ENCODE measurements at regions of chr10 and their contacts with region 1.

Region 1: GRCh38 chr10:17430647-17431355 is 23.6 kb downstream of the ST8SIA6 start:
- DNase-seq: peak; percentile 54 to 68 (median 63)
- H3K4me3 ChIP-seq: no peak overlapping the region
- H3K4me3 Mint-ChIP-seq: peak overlapping the region in 6 of 8 donors; percentile 39 to 79 (median 66)
- H3K27ac ChIP-seq: no peak overlapping the region
- H3K27ac Mint-ChIP-seq: peak overlapping the region; percentile 24 to 95 (median 50)
- H3K4me1 ChIP-seq: peaks cover 52% of the 10 kb centered on the region
- H3K4me1 Mint-ChIP-seq: peaks cover 45 to 53% (median 50%) of the 10 kb centered on the region in 4 donors
- H3K27me3 ChIP-seq: no peaks in the 10 kb centered on the region
- H3K27me3 Mint-ChIP-seq: peaks cover 0 to 1% of the 10 kb centered on the region in 2 donors

Region 2: DNA sequence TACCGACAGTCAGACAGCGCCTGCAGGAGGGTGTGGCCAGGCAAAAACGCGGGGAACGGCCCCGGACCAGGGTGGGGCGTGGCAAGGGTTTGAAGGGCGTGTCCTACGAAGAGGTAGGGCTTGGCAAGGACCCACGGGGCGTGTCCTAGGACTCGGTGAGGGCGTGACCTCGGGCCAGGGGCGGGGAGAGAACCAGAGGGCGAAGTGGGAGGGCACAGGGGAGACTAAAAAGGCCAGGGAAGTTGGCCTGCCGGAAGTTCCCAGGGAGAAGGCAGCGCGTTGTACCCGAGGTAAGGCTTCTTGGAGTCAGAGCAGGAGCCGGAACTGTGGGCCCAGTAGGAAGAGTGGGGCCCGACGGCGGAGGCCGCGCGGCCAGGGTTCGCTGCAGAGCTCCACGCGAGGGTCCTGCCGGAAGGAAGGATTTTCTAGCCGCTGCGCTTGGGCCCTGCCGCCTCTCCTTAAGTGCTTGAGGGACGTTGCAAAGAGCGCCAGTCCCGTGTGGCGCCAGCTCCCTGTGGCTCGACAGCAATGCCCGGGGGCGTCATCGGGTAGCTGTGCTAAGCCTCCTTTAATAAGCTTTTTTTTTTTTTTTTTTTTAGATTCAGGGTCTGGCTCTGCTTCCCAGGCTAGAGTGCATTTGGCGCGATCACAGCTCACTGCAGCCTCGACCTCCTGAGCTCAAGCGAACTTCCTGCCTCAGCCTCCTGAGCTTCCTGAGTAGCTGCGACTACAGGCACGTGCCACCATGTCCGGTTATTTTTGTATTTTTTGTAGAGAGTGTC is 993.9 kb before region 1 on chr10 and contains the start of gene PTER:
- CTCF ChIA-PET with region 1: no interaction called
- POLR2A ChIA-PET with region 1: no interaction called
- intact Hi-C with region 1: loop called (anchors 5 kb)
- DNase-seq: peak; percentile 94 to 96 (median 95)
- H3K4me3 ChIP-seq: peak within 1 kb of the TSS; percentile 63 to 65
- H3K4me3 Mint-ChIP-seq: peak within 1 kb of the TSS; percentile 88 to 97 (median 93)
- H3K27ac ChIP-seq: peak within 1 kb of the TSS; percentile 65
- H3K27ac Mint-ChIP-seq: peak within 1 kb of the TSS; percentile 85 to 96 (median 95)
- H3K4me1 ChIP-seq: peaks cover 52% of the 10 kb centered on the region
- H3K4me1 Mint-ChIP-seq: peaks cover 35 to 58% (median 48%) of the 10 kb centered on the region in 4 donors
- H3K27me3 ChIP-seq: no peaks in the 10 kb centered on the region
- H3K27me3 Mint-ChIP-seq: no peaks in the 10 kb centered on the region
- total RNA-seq, gene PTER: 24.1 to 26.5 TPM

Region 3: DNA sequence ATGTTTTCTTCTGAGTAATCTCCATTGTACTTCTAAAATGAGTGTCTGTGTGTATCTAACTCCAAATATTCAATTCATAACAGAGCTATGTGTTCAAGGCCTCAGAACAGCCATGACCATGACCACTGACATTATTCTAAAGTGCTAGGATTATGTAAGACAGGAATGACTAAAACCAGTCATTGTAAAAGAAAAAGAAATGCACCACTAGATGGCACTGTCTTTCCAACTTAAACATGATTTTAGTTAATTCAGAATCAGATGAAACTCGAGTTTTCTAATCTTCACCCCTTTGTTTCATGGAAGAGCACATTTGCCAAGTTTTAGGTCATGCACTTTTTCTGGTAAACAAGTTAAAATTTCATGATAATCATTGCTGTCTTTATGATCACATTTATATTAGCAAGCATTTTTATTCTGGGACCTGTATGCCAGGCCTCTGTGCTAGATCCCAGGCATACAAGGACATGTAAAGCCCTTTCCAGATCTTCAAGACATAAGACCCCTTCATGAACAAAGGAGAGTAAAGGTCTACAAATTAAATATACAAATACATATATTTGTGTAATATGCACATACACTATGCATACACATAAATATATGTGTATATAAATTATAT is 587.4 kb before region 1 on chr10:
- CTCF ChIA-PET with region 1: interaction called, 5 read pairs
- POLR2A ChIA-PET with region 1: no interaction called
- intact Hi-C with region 1: loop called (anchors 1 kb)
- DNase-seq: peak in 4 of 5 donors; percentile 63 to 69 (median 67)
- H3K4me3 ChIP-seq: no peak overlapping the region
- H3K4me3 Mint-ChIP-seq: no peak overlapping the region
- H3K27ac ChIP-seq: no peak overlapping the region
- H3K27ac Mint-ChIP-seq: peak overlapping the region in 1 of 7 donors; percentile 31
- H3K4me1 ChIP-seq: no peaks in the 10 kb centered on the region
- H3K4me1 Mint-ChIP-seq: peaks cover 0 to 3% (median 0%) of the 10 kb centered on the region in 4 donors
- H3K27me3 ChIP-seq: no peaks in the 10 kb centered on the region
- H3K27me3 Mint-ChIP-seq: no peaks in the 10 kb centered on the region

Region 4: DNA sequence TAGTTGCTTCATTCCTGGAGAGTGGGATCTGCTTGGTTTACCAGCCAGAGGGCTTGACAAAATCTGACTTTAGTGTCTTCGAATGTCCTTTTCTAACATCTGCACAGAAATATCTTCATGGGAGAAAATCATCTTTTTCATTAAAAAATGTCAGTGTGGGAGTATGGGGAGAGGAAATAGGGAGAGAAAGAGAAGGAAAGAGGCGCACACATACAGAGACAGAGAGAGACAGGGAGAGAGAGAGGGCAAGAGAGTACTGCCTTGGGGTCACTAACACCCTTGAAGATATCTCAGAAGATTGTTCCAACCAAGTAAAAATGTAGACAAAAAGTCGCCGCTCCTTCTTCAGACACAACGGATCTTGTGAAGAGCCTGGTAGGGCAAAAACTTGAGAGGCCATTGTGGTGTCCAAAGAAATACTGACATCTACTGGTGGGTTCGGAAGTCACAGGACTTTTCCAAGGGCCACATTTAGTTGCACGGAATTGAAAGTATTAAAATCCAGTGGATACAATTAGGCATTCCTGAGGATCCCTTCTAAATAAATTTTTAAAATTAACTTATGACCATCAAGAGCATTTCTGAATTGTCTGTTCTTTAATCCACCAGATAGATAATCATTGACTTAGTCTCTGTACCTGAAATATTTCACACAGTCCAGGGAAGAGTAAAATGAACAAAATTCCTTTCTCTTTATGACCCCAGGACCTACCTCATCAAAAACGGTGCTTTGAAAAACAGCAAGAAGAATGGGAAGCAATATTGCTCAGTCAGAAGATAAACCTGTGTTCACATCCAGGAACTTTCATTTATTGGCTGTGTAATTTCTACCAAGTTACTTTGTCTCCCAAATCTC is 173.1 kb before region 1 on chr10:
- CTCF ChIA-PET with region 1: interaction called, 3 read pairs
- POLR2A ChIA-PET with region 1: no interaction called
- intact Hi-C with region 1: loop called (anchors 1 kb)
- DNase-seq: peak; percentile 49 to 71 (median 64)
- H3K4me3 ChIP-seq: no peak overlapping the region
- H3K4me3 Mint-ChIP-seq: peak overlapping the region in 1 of 8 donors; percentile 43
- H3K27ac ChIP-seq: no peak overlapping the region
- H3K27ac Mint-ChIP-seq: peak overlapping the region in 3 of 7 donors; percentile 0 to 84 (median 67)
- H3K4me1 ChIP-seq: no peaks in the 10 kb centered on the region
- H3K4me1 Mint-ChIP-seq: peaks cover 0 to 6% (median 4%) of the 10 kb centered on the region in 4 donors
- H3K27me3 ChIP-seq: no peaks in the 10 kb centered on the region
- H3K27me3 Mint-ChIP-seq: no peaks in the 10 kb centered on the region

Region 5: GRCh38 chr10:17409170-17409733 is 21.5 kb before region 1 on chr10:
- CTCF ChIA-PET with region 1: interaction called, 467 read pairs
- POLR2A ChIA-PET with region 1: interaction called, 82 read pairs
- intact Hi-C with region 1: loop called (anchors 1 kb)
- DNase-seq: peak in 4 of 5 donors; percentile 40 to 54 (median 51)
- H3K4me3 ChIP-seq: no peak overlapping the region
- H3K4me3 Mint-ChIP-seq: peak overlapping the region in 4 of 8 donors; percentile 1 to 42 (median 2)
- H3K27ac ChIP-seq: no peak overlapping the region
- H3K27ac Mint-ChIP-seq: peak overlapping the region in 6 of 7 donors; percentile 16 to 86 (median 42)
- H3K4me1 ChIP-seq: peaks cover 14% of the 10 kb centered on the region
- H3K4me1 Mint-ChIP-seq: peaks cover 15 to 27% (median 20%) of the 10 kb centered on the region in 4 donors
- H3K27me3 ChIP-seq: no peaks in the 10 kb centered on the region
- H3K27me3 Mint-ChIP-seq: peaks cover 0 to 3% of the 10 kb centered on the region in 2 donors

Region 6: DNA sequence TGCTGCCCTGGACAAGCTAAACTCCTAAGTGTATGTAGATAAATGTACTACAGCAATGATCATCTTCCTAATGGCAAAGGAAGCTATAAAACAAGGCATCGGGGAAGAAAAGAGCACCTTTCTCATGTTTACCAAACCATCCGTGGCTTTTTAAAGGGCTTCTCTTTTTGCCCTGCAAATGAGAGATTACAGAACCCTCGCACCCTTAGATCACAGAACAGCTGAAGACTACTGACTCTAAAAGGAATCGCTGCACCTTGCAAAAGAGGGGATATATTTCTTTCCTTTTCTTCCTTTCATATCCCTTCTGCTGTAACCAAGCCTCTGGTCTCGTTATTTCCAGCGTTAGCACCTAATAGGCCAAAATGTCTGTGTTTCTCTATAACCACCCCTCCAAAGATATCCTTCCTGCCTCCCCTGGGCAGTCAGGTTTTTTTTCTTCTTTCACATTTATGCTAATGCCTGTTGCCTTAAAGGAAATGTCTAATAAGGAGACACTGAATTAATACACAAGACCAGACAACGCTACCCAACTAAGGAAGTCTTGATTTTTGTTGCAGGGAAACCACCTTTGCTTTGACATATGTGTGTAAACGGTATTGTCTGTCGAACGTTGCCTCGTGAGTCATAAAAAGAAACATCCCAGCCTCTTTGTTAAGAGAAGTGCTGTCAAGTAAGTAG is 13.0 kb after region 1 on chr10:
- CTCF ChIA-PET with region 1: interaction called, 22 read pairs
- POLR2A ChIA-PET with region 1: no interaction called
- intact Hi-C with region 1: no loop called
- DNase-seq: peak in 2 of 5 donors; percentile 21 to 27
- H3K4me3 ChIP-seq: no peak overlapping the region
- H3K4me3 Mint-ChIP-seq: peak overlapping the region; percentile 21 to 67 (median 56)
- H3K27ac ChIP-seq: no peak overlapping the region
- H3K27ac Mint-ChIP-seq: peak overlapping the region in 6 of 7 donors; percentile 7 to 57 (median 18)
- H3K4me1 ChIP-seq: peaks cover 17% of the 10 kb centered on the region
- H3K4me1 Mint-ChIP-seq: peaks cover 9 to 16% (median 14%) of the 10 kb centered on the region in 4 donors
- H3K27me3 ChIP-seq: no peaks in the 10 kb centered on the region
- H3K27me3 Mint-ChIP-seq: peaks cover 5 to 15% of the 10 kb centered on the region in 2 donors

Measured in CD4-positive, alpha-beta memory T cell (primary cell).